Activated T-helper 2 cell treated with anti-CD3 and anti-CD28 coated beads, Interferon-gamma antibody, Interleukin-2, Interleukin-4, amounts not matched to agents 10 μg/mL and 5 μg/mL and 100 μg/mL, durations not matched to agents 14 hours and 24 hours and 36 hours (primary cell): ENCODE measurements at regions of chr9 and their contacts with region 1.

Region 1: GRCh38 chr9:100028201-100028784 is 70.5 kb downstream of the ERP44 start:
- DNase-seq: peak; percentile 50
- H3K4me3 Mint-ChIP-seq: no peak overlapping the region
- H3K27ac Mint-ChIP-seq: no peak overlapping the region
- H3K4me1 Mint-ChIP-seq: peaks cover 7% of the 10 kb centered on the region
- H3K27me3 Mint-ChIP-seq: no peaks in the 10 kb centered on the region

Region 2: GRCh38 chr9:100084734-100085133 is 56.4 kb after region 1 on chr9:
- intact Hi-C with region 1: loop called (anchors 2 kb)
- DNase-seq: no peak
- H3K4me3 Mint-ChIP-seq: no peak overlapping the region
- H3K27ac Mint-ChIP-seq: peak overlapping the region; percentile 67
- H3K4me1 Mint-ChIP-seq: peaks cover 65% of the 10 kb centered on the region
- H3K27me3 Mint-ChIP-seq: no peaks in the 10 kb centered on the region

Region 3: DNA sequence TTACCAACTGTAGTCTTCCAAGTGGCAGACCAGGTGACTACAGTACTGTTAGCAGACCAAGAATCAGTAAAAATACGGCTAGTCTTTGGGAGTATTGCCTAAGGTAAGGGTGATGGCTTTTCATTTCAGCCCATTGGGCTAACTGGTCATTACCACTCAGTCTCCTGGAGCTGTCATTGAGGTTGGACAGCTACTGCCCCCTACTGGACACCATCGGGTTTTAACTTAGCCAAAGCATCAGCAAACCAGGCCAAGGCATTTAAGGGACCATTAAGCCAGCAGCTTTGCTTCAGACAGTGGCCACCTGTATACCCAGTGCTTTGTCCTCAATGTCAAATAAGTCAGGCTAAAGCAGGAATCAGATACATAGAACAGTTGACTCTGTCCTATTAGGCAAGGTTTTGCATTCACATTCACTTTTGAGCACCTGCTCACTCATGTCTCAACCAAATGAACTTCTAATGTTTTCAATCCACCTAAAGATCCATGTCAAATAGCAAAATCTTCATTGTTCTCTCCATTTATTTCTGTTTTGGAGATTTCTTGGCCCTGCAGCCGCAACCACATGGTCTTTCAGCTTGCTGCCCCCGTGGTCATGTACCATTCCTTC is 188.0 kb after region 1 on chr9:
- intact Hi-C with region 1: loop called (anchors 1 kb)
- DNase-seq: peak; percentile 49
- H3K4me3 Mint-ChIP-seq: no peak overlapping the region
- H3K27ac Mint-ChIP-seq: no peak overlapping the region
- H3K4me1 Mint-ChIP-seq: peaks cover 10% of the 10 kb centered on the region
- H3K27me3 Mint-ChIP-seq: no peaks in the 10 kb centered on the region

Region 4: GRCh38 chr9:100322954-100323536 is 294.8 kb after region 1 on chr9:
- intact Hi-C with region 1: loop called (anchors 1 kb)
- DNase-seq: no peak
- H3K4me3 Mint-ChIP-seq: no peak overlapping the region
- H3K27ac Mint-ChIP-seq: no peak overlapping the region
- H3K4me1 Mint-ChIP-seq: peaks cover 3% of the 10 kb centered on the region
- H3K27me3 Mint-ChIP-seq: no peaks in the 10 kb centered on the region